ENCODE measurements at regions of chr7 and their contacts with region 1.

Region 1: DNA sequence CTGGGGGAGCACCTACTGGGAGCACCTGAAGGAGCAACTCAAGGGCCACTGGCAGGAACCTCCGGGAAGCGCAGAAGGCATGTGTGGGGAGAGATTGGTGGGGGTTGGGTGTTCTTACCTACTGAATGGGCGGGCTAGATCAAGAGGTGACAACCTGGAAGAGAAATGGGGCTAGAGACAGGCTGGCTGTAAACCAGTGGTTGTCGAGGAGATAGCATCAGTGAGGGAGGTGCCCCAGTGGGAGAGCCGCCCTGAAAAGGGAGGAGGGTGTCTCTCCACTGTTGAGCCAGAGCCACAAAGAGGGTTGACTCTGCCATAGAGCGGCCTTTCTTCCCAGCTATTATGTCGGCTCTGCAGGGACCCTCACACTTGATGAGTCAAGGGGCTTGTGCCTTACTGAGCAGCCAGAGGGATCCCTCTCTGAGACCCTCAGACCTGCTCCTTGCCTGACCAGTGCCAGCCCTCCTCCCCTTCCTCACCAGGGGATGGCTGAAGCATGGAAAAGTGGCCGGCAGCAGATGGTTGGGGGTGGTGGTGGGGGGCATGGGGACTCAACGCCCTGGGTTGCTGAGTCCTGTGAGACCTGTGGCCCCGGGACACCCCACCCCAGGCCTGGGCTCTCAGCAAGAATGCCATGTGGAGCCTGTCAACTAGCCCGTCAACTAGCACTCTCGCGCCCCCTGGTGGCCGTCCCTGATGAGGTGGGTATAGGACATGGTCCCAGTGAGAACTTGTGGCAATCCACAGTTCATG is 36.5 kb upstream of the PURB start:
- DNase-seq: peak; percentile 86
- H3K4me3 ChIP-seq: no peak overlapping the region
- H3K27ac ChIP-seq: no peak overlapping the region
- H3K4me1 ChIP-seq: no peaks in the 10 kb centered on the region
- CTCF ChIP-seq: peak; percentile 95

Region 2: DNA sequence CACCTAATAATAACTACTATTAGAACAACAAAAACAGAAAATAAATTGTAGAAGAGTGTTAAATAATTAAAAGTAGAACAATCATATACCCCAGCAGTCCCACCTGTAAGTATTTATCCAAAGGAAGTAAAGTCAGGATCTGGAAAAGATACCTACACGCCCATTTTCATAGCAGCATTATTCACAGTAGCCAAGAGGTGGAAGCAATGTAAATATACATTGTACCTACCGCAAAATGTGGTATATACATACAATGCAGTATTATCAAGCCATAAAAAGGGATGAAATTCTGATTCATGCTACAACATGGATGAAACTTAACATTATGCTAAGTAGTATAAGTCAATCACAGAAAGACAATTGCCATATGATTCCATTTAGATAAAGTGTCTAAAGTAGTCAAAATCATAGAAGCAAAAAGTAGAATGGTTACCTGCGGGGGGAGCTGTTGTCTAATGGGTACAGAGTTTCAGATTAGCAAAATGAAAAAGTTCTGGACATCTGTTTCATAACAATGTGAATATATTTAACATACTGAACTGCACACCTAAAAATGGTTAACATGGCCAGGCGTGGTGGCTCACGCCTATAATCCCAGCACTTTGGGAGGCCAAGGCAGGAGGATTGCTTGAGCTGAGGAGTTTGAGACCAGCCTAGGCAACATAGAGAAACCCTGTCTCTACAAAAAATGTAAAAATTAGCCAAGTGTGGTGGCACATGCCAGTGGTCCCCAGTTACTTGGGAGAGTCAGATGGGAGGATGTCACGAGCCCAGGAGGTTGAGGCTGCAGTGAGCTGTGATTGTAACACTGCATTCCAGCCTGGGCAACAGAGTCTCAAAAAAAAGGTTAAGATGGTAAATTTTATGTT is 333.7 kb before region 1 on chr7:
- CTCF ChIA-PET with region 1: no interaction called
- POLR2A ChIA-PET with region 1: no interaction called
- intact Hi-C with region 1: loop called (anchors 1 kb)
- DNase-seq: peak; percentile 73
- H3K4me3 ChIP-seq: no peak overlapping the region
- H3K27ac ChIP-seq: no peak overlapping the region
- H3K4me1 ChIP-seq: peaks cover 9% of the 10 kb centered on the region
- CTCF ChIP-seq: peak; percentile 93

Region 3: GRCh38 chr7:44693721-44694285 is 228.0 kb before region 1 on chr7:
- CTCF ChIA-PET with region 1: no interaction called
- POLR2A ChIA-PET with region 1: no interaction called
- intact Hi-C with region 1: no loop called
- DNase-seq: no peak
- H3K4me3 ChIP-seq: no peak overlapping the region
- H3K27ac ChIP-seq: no peak overlapping the region
- H3K4me1 ChIP-seq: no peaks in the 10 kb centered on the region
- CTCF ChIP-seq: no peak

Region 4: GRCh38 chr7:44858161-44858560 is 63.6 kb before region 1 on chr7:
- CTCF ChIA-PET with region 1: interaction called, 4 read pairs
- POLR2A ChIA-PET with region 1: interaction called, 4 read pairs
- intact Hi-C with region 1: loop called (anchors 1 kb)
- DNase-seq: peak; percentile 31
- H3K4me3 ChIP-seq: no peak overlapping the region
- H3K27ac ChIP-seq: no peak overlapping the region
- H3K4me1 ChIP-seq: peaks cover 3% of the 10 kb centered on the region
- CTCF ChIP-seq: peak; percentile 55